Naive thymus-derived CD4-positive, alpha-beta T cell (primary cell): ENCODE measurements at regions of chr2 and their contacts with region 1.

Region 1: DNA sequence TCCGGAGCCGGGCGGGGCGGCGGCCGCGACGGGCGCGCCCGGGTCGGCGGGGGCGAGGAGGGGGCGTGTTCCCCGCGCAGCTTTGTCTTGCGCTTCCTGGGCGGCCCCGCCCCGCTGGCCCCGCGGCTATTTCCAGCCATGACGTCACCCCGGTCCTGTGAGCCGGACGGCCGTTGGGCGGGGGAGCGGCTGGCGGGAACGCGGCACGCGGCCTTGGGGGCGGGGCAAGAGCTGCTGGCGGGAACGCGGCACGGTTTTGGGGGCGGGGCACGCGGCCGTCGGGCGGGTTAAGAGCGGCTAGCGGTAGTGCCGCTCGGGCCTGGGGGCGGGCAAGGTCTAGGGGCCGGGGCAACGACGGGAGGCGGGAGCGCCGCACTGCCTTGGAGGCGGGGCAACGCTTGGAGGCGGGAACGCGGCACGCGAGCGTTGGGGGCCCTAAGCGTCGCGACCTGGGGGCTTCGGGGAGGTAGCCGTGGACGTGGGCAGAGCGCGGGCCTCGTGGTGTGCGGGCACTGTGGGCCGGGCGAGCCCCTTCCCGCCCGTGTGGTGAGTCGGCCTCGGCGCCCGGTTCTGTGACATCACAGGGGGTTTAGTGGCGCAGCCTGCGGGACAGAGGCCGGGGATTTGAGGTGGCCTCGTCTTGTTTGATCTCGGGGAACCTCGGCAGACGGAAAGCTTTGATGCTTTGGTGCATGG is 704 bp downstream of the KLF11 start:
- DNase-seq: peak; percentile 79 to 93 (median 89)
- ATAC-seq: peak; percentile 73
- H3K4me3 ChIP-seq: peak overlapping the region; percentile 48
- H3K4me3 Mint-ChIP-seq: peak overlapping the region; percentile 76 to 89 (median 84)
- H3K27ac ChIP-seq: peak overlapping the region; percentile 76
- H3K27ac Mint-ChIP-seq: peak overlapping the region; percentile 82 to 95 (median 88)
- H3K4me1 ChIP-seq: peaks cover 6% of the 10 kb centered on the region in 2 donors
- H3K4me1 Mint-ChIP-seq: peaks cover 14 to 35% (median 29%) of the 10 kb centered on the region in 7 donors
- H3K27me3 ChIP-seq: no peaks in the 10 kb centered on the region
- H3K27me3 Mint-ChIP-seq: peaks cover 0 to 31% (median 0%) of the 10 kb centered on the region in 5 donors

Region 2: GRCh38 chr2:8836971-8837794 is 1206.9 kb before region 1 on chr2 and contains the start of gene KIDINS220:
- CTCF ChIA-PET with region 1: no interaction called
- POLR2A ChIA-PET with region 1: no interaction called
- intact Hi-C with region 1: loop called in 1 of 2 experiments (anchors 5 kb)
- DNase-seq: peak; percentile 71 to 87 (median 82)
- ATAC-seq: peak; percentile 99
- H3K4me3 ChIP-seq: peak within 1 kb of the TSS; percentile 69
- H3K4me3 Mint-ChIP-seq: peak within 1 kb of the TSS; percentile 96 to 100 (median 99)
- H3K27ac ChIP-seq: peak within 1 kb of the TSS; percentile 78
- H3K27ac Mint-ChIP-seq: peak within 1 kb of the TSS; percentile 94 to 100 (median 98)
- H3K4me1 ChIP-seq: peaks cover 23 to 29% of the 10 kb centered on the region in 2 donors
- H3K4me1 Mint-ChIP-seq: peaks cover 26 to 60% (median 51%) of the 10 kb centered on the region in 7 donors
- H3K27me3 ChIP-seq: no peaks in the 10 kb centered on the region
- H3K27me3 Mint-ChIP-seq: peaks cover 0 to 5% (median 0%) of the 10 kb centered on the region in 5 donors
- total RNA-seq, gene KIDINS220: 34.5 to 54.3 (median 48.3) TPM

Region 3: GRCh38 chr2:9423100-9423921 is 620.7 kb before region 1 on chr2 and contains the starts of genes CPSF3 and ITGB1BP1:
- CTCF ChIA-PET with region 1: no interaction called
- POLR2A ChIA-PET with region 1: no interaction called
- intact Hi-C with region 1: loop called (anchors 1 to 5 kb)
- DNase-seq: peak; percentile 88 to 98 (median 94)
- ATAC-seq: peak; percentile 92
- H3K4me3 ChIP-seq: peak within 1 kb of the TSS; percentile 90
- H3K4me3 Mint-ChIP-seq: peak within 1 kb of the TSS in 5 of 10 donors; percentile 87 to 95 (median 92)
- H3K27ac ChIP-seq: peak within 1 kb of the TSS; percentile 84
- H3K27ac Mint-ChIP-seq: peak within 1 kb of the TSS in 8 of 9 donors; percentile 82 to 97 (median 92)
- H3K4me1 ChIP-seq: peaks cover 22 to 24% of the 10 kb centered on the region in 2 donors
- H3K4me1 Mint-ChIP-seq: peaks cover 20 to 41% (median 28%) of the 10 kb centered on the region in 7 donors
- H3K27me3 ChIP-seq: no peaks in the 10 kb centered on the region
- H3K27me3 Mint-ChIP-seq: no peaks in the 10 kb centered on the region
- total RNA-seq, gene CPSF3: 18.0 to 47.8 (median 21.7) TPM
- total RNA-seq, gene ITGB1BP1: 45.1 to 107 (median 54.3) TPM

Region 4: DNA sequence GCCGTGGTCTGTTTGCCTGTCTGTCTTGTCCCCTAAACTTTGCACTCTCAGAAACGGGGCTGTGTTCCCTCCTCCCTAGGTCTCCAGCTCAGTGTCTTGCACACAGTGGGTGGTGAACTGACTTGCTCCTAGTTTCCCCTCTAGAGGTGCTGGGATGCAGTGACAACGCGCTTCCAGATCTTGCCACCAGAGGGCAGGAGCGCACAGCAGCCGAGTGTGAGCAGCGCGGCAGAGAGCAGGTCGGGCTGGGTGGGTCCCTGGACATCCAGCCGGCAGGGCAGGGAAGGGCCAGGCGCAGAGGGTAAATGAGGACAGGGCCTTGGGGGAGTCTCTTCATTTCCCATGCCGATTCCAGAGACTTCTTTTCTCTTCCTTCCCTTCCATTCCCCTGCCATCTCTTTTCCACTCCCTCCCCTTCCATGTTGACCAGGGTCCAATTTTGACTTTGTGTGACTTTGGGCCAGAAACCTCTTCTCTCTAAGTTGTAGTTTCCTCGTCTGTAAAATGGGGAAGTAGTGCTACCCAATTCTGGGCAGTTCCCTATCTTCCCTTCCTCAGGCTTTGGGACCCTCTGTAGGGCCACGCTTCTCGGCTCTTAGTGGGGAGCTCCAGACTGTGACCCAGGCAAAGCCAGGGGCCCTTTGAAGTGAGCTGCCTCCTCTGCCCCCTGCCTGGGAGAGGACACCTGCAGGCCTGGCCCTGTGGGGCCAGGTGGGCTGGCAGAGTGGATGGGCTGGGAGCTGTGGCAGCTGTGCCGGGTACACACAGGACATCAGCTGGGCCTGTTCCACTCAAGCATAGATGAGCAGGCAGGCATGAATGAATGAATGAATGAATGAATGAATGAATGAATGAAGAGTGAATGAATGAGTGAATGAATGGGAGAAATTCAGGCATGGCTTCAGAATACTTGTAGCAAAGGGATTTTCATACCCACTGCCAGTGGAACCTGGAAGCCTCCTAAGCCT is 244.1 kb before region 1 on chr2:
- CTCF ChIA-PET with region 1: interaction called, 10 read pairs
- POLR2A ChIA-PET with region 1: no interaction called
- intact Hi-C with region 1: loop called (anchors 1 kb)
- DNase-seq: peak; percentile 55 to 89 (median 76)
- ATAC-seq: peak; percentile 91
- H3K4me3 ChIP-seq: peak overlapping the region; percentile 10
- H3K4me3 Mint-ChIP-seq: peak overlapping the region; percentile 4 to 89 (median 60)
- H3K27ac ChIP-seq: no peak overlapping the region
- H3K27ac Mint-ChIP-seq: peak overlapping the region in 5 of 9 donors; percentile 7 to 85 (median 28)
- H3K4me1 ChIP-seq: peaks cover 9 to 12% of the 10 kb centered on the region in 2 donors
- H3K4me1 Mint-ChIP-seq: peaks cover 11 to 29% (median 14%) of the 10 kb centered on the region in 7 donors
- H3K27me3 ChIP-seq: no peaks in the 10 kb centered on the region
- H3K27me3 Mint-ChIP-seq: peaks cover 0 to 10% (median 0%) of the 10 kb centered on the region in 5 donors

Region 5: GRCh38 chr2:9843229-9844035 is 200.6 kb before region 1 on chr2 and contains the start of gene TAF1B:
- CTCF ChIA-PET with region 1: interaction called, 4 read pairs
- POLR2A ChIA-PET with region 1: interaction called, 3 read pairs
- intact Hi-C with region 1: loop called (anchors 1 kb)
- DNase-seq: peak; percentile 55 to 89 (median 80)
- ATAC-seq: peak; percentile 87
- H3K4me3 ChIP-seq: peak within 1 kb of the TSS; percentile 85
- H3K4me3 Mint-ChIP-seq: peak within 1 kb of the TSS; percentile 89 to 95 (median 93)
- H3K27ac ChIP-seq: peak within 1 kb of the TSS; percentile 72
- H3K27ac Mint-ChIP-seq: peak within 1 kb of the TSS; percentile 74 to 97 (median 92)
- H3K4me1 ChIP-seq: peaks cover 11 to 13% of the 10 kb centered on the region in 2 donors
- H3K4me1 Mint-ChIP-seq: peaks cover 25 to 56% (median 48%) of the 10 kb centered on the region in 7 donors
- H3K27me3 ChIP-seq: no peaks in the 10 kb centered on the region
- H3K27me3 Mint-ChIP-seq: peaks cover 0 to 6% (median 0%) of the 10 kb centered on the region in 5 donors
- total RNA-seq, gene TAF1B: 9.2 to 28.2 (median 20.9) TPM

Region 6: DNA sequence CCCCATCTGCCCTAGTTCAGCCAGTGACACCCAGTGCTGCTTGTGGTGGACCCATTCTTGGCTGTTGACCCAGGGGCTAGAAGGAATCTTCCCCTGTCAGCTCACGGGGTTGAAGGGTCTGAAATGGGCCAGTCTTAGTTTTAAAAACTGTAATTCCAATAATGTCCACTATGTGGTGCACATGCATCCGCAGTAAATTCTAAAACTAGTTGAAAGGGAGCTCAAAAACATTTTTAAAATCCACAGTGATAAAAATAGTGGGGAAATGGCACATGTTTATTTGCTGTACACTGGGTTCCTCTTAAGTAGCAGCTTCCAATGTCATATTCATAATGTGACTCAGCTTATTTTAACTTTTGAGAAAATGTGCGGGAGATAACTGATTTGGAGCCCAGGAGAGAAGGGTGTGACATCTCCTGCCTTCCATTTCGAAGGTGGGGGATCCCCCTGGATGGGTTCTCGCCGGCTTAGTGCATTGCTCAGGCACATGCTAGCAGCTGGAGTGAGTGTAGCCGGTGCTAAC is 59.8 kb before region 1 on chr2:
- CTCF ChIA-PET with region 1: interaction called, 153 read pairs
- POLR2A ChIA-PET with region 1: interaction called, 10 read pairs
- intact Hi-C with region 1: loop called (anchors 1 kb)
- DNase-seq: peak in 6 of 9 donors; percentile 18 to 63 (median 52)
- ATAC-seq: peak; percentile 94
- H3K4me3 ChIP-seq: no peak overlapping the region
- H3K4me3 Mint-ChIP-seq: no peak overlapping the region
- H3K27ac ChIP-seq: no peak overlapping the region
- H3K27ac Mint-ChIP-seq: peak overlapping the region in 1 of 9 donors; percentile 55
- H3K4me1 ChIP-seq: no peaks in the 10 kb centered on the region
- H3K4me1 Mint-ChIP-seq: peaks cover 9 to 18% (median 14%) of the 10 kb centered on the region in 7 donors
- H3K27me3 ChIP-seq: no peaks in the 10 kb centered on the region
- H3K27me3 Mint-ChIP-seq: peaks cover 0 to 21% (median 5%) of the 10 kb centered on the region in 5 donors

Region 7: DNA sequence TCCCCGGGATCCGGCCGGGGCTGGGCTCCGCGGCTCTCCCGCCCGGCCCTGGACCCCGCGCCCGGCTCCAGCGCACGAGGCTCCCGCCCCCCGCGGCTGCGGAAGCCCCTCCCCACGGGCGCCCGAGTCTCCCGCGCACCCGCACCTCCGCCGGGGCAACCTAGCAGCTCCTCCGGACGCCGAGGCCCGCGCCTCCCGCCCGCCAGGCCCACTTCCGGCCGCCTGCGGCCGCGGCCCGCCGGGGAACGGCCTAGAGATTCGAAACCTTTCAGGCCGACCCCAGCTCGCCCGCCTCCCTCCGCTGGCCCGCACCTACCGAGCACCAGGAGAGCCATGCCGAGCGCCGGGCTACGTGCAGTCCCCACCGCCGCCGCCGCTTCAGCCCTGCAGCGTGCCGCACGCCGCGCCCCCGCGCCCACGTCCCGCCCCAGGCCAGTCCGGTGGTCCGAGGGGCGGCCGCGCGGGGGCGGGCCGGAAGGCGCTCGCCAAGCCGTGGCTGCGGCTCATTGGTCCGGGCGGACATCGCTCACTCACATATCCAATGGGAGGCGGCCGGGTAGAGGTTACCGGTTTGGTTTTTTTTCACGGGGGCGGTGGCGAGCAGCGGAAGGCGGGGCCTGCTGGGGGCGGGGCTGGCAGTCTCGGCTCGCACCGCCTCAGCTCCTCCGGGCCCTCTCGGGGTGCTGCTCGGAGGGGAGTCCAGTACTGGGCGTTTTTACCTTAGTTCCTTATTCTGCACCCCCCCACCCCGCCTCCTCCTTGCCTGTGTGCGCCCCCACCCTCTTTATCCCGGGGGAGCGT is 768.5 kb after region 1 on chr2 and contains the start of gene PDIA6:
- CTCF ChIA-PET with region 1: no interaction called
- POLR2A ChIA-PET with region 1: no interaction called
- intact Hi-C with region 1: loop called in 1 of 2 experiments (anchors 10 kb)
- DNase-seq: peak; percentile 87 to 96 (median 90)
- ATAC-seq: peak; percentile 95
- H3K4me3 ChIP-seq: peak within 1 kb of the TSS; percentile 73
- H3K4me3 Mint-ChIP-seq: peak within 1 kb of the TSS; percentile 87 to 95 (median 91)
- H3K27ac ChIP-seq: peak within 1 kb of the TSS; percentile 86
- H3K27ac Mint-ChIP-seq: peak within 1 kb of the TSS; percentile 77 to 96 (median 84)
- H3K4me1 ChIP-seq: peaks cover 14 to 15% of the 10 kb centered on the region in 2 donors
- H3K4me1 Mint-ChIP-seq: peaks cover 28 to 44% (median 39%) of the 10 kb centered on the region in 7 donors
- H3K27me3 ChIP-seq: no peaks in the 10 kb centered on the region
- H3K27me3 Mint-ChIP-seq: peaks cover 0 to 15% (median 0%) of the 10 kb centered on the region in 5 donors
- total RNA-seq, gene PDIA6: 24.3 to 173 (median 46.8) TPM

Region 8: GRCh38 chr2:10911261-10912075 is 867.4 kb after region 1 on chr2 and contains the start of gene KCNF1:
- CTCF ChIA-PET with region 1: no interaction called
- POLR2A ChIA-PET with region 1: no interaction called
- intact Hi-C with region 1: no loop called
- DNase-seq: no peak
- ATAC-seq: no peak
- H3K4me3 ChIP-seq: no peak within 1 kb of the TSS
- H3K4me3 Mint-ChIP-seq: peak within 1 kb of the TSS in 8 of 10 donors; percentile 8 to 81 (median 48)
- H3K27ac ChIP-seq: no peak within 1 kb of the TSS
- H3K27ac Mint-ChIP-seq: peak within 1 kb of the TSS in 1 of 9 donors; percentile 1
- H3K4me1 ChIP-seq: no peaks in the 10 kb centered on the region
- H3K4me1 Mint-ChIP-seq: peaks cover 0 to 20% (median 5%) of the 10 kb centered on the region in 7 donors
- H3K27me3 ChIP-seq: no peaks in the 10 kb centered on the region
- H3K27me3 Mint-ChIP-seq: peaks cover 36 to 46% (median 42%) of the 10 kb centered on the region in 5 donors
- total RNA-seq, gene KCNF1: not detected